ENCODE measurements at regions of chr19 and their contacts with region 1.

Region 1: GRCh38 chr19:55476100-55476775 is at the start of gene ZNF628:
- DNase-seq: peak; percentile 96
- H3K4me3 Mint-ChIP-seq: peak within 1 kb of the TSS; percentile 91
- H3K27ac Mint-ChIP-seq: peak within 1 kb of the TSS; percentile 79
- H3K4me1 Mint-ChIP-seq: peaks cover 18% of the 10 kb centered on the region
- H3K27me3 Mint-ChIP-seq: peaks cover 2% of the 10 kb centered on the region
- total RNA-seq, gene ZNF628: 7.6 and 10.4 TPM in 2 replicates

Region 2: GRCh38 chr19:54463531-54464043 is 1012.7 kb before region 1 on chr19 and contains the start of gene LENG9:
- intact Hi-C with region 1: loop called (anchors 1 kb)
- DNase-seq: peak; percentile 96
- H3K4me3 Mint-ChIP-seq: peak within 1 kb of the TSS; percentile 84
- H3K27ac Mint-ChIP-seq: peak within 1 kb of the TSS; percentile 89
- H3K4me1 Mint-ChIP-seq: peaks cover 25% of the 10 kb centered on the region
- H3K27me3 Mint-ChIP-seq: peaks cover 21% of the 10 kb centered on the region
- total RNA-seq, gene LENG9: 8.4 and 11.5 TPM in 2 replicates

Region 3: DNA sequence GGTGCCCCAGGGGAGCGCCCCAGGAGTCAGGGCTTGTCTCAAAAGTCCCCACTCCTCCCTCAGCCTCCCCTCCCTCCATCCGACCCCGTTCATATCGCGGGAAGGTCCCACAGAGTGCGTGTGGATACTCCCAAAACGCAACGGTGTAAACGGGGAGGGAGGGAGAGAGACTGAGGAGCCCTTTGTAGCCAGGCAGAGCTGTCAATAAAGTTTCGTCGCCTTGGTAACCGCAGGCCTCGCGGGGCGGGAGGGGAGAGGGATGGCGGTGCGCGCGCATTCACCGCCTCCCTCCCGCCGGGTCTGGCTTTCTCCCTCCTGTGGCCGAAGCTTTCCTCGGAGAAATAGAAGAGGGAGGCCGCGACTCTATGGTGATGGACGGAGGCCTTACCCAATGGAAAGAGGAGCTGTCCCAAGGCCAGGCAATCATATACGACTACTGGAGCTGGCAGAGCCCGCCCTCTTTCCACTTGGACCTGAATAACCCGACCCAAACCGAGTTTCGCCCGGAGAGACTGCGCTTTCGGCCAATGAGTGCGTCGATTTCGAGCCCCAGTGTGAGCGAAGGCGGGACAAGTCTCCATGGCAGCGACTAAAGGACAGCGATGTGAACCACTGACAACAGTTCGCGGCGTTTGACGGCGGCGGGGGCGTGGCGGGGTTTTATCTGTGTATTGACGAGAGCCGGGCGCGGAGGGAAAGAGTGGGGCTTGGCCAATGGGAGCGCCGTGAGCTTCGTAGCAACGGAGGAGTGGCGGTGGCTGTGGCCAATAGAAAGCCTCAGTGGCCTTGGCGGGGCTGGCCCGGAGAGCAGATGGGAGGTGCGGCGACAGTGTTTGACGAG is 137.0 kb before region 1 on chr19 and contains the start of gene KMT5C:
- intact Hi-C with region 1: loop called (anchors 1 kb)
- DNase-seq: peak; percentile 100
- H3K4me3 Mint-ChIP-seq: peak within 1 kb of the TSS; percentile 96
- H3K27ac Mint-ChIP-seq: peak within 1 kb of the TSS; percentile 99
- H3K4me1 Mint-ChIP-seq: peaks cover 14% of the 10 kb centered on the region
- H3K27me3 Mint-ChIP-seq: peaks cover 9% of the 10 kb centered on the region
- total RNA-seq, gene KMT5C: 29.1 and 29.9 TPM in 2 replicates

Region 4: GRCh38 chr19:55447421-55448174 is 28.6 kb before region 1 on chr19:
- intact Hi-C with region 1: no loop called
- DNase-seq: no peak
- H3K4me3 Mint-ChIP-seq: no peak overlapping the region
- H3K27ac Mint-ChIP-seq: no peak overlapping the region
- H3K4me1 Mint-ChIP-seq: no peaks in the 10 kb centered on the region
- H3K27me3 Mint-ChIP-seq: peaks cover 47% of the 10 kb centered on the region

Region 5: DNA sequence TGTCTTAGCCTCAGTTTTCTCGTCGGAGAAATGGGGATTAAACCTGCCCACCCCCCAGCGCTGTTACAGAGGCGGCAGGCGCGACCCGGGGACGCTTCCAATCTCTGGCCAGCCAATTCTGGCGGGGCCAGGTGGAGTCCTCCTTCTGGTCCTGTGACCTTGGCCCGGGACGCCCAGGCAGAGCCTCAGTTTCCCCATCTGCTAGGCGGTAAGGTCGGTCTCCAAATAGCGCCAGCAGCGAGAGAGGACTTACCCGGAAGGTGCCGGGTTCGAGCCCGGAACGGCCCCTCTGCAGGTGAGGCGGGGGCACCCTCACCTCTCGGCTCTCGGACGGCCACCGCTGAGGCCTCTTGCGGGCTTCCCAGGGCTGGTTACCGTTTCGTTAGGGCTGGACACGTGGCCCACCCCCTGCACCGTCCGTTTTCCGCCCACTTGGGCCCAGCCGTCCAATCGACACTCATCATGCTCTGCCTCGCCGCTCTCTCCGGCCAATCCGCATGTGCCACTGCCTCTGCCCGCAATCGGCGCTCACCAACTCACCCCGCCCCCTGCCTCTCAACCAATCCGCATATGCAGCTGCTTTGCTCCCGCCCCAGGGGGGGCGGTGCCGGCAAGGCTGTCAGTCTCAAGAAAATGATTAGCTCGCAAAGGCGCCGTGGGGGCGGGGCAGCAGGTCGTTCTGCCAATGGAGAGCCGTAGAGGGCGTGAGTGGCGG is 14.8 kb before region 1 on chr19 and contains the start of gene ISOC2:
- intact Hi-C with region 1: loop called (anchors 1 kb)
- DNase-seq: peak; percentile 100
- H3K4me3 Mint-ChIP-seq: peak within 1 kb of the TSS; percentile 81
- H3K27ac Mint-ChIP-seq: peak within 1 kb of the TSS; percentile 77
- H3K4me1 Mint-ChIP-seq: peaks cover 5% of the 10 kb centered on the region
- H3K27me3 Mint-ChIP-seq: peaks cover 2% of the 10 kb centered on the region
- total RNA-seq, gene ISOC2: 31.3 and 34.3 TPM in 2 replicates

Region 6: GRCh38 chr19:55599468-55600279 is 123.4 kb after region 1 on chr19 and contains the start of gene FIZ1:
- intact Hi-C with region 1: loop called (anchors 1 kb)
- DNase-seq: peak; percentile 95
- H3K4me3 Mint-ChIP-seq: peak within 1 kb of the TSS; percentile 93
- H3K27ac Mint-ChIP-seq: peak within 1 kb of the TSS; percentile 98
- H3K4me1 Mint-ChIP-seq: peaks cover 28% of the 10 kb centered on the region
- H3K27me3 Mint-ChIP-seq: no peaks in the 10 kb centered on the region
- total RNA-seq, gene FIZ1: 24.2 and 24.7 TPM in 2 replicates

Region 7: GRCh38 chr19:55632463-55632834 is 156.2 kb after region 1 on chr19:
- intact Hi-C with region 1: loop called (anchors 1 kb)
- DNase-seq: peak; percentile 82
- H3K4me3 Mint-ChIP-seq: no peak overlapping the region
- H3K27ac Mint-ChIP-seq: peak overlapping the region; percentile 68
- H3K4me1 Mint-ChIP-seq: peaks cover 47% of the 10 kb centered on the region
- H3K27me3 Mint-ChIP-seq: peaks cover 20% of the 10 kb centered on the region